ENCODE measurements at regions of chr2 and their contacts with region 1.

Region 1: GRCh38 chr2:230411570-230412370 is 4.2 kb upstream of the SP100 start:
- DNase-seq: peak; percentile 75
- H3K4me3 Mint-ChIP-seq: peak overlapping the region; percentile 87
- H3K27ac Mint-ChIP-seq: peak overlapping the region; percentile 88
- H3K4me1 Mint-ChIP-seq: peaks cover 51% of the 10 kb centered on the region
- H3K27me3 Mint-ChIP-seq: no peaks in the 10 kb centered on the region

Region 2: GRCh38 chr2:230202430-230203109 is 209.2 kb before region 1 on chr2:
- CTCF ChIA-PET with region 1: no interaction called
- POLR2A ChIA-PET with region 1: no interaction called
- intact Hi-C with region 1: loop called (anchors 2 kb)
- DNase-seq: peak; percentile 75
- H3K4me3 Mint-ChIP-seq: peak overlapping the region; percentile 10
- H3K27ac Mint-ChIP-seq: peak overlapping the region; percentile 80
- H3K4me1 Mint-ChIP-seq: peaks cover 35% of the 10 kb centered on the region
- H3K27me3 Mint-ChIP-seq: no peaks in the 10 kb centered on the region

Region 3: DNA sequence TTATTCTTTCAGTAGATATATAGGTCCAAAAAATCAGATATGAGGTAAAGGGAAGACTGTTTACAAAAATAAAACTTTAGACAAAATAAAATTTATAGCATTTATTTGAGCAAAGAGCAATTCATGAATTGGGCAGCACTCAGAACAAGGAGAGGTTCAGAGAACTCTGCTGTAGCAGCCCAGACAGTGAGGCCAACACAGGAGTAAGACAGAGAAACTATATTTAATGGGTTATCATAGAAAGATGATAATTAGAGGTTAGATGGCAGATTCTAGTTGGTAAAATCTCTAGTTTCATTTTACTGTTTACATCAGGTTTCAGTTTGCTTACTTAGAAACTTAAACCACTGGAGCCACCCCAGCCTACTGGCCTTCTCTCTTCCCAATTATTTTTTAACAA is 114.9 kb before region 1 on chr2:
- CTCF ChIA-PET with region 1: no interaction called
- POLR2A ChIA-PET with region 1: no interaction called
- intact Hi-C with region 1: no loop called
- DNase-seq: no peak
- H3K4me3 Mint-ChIP-seq: no peak overlapping the region
- H3K27ac Mint-ChIP-seq: no peak overlapping the region
- H3K4me1 Mint-ChIP-seq: peaks cover 6% of the 10 kb centered on the region
- H3K27me3 Mint-ChIP-seq: no peaks in the 10 kb centered on the region

Region 4: DNA sequence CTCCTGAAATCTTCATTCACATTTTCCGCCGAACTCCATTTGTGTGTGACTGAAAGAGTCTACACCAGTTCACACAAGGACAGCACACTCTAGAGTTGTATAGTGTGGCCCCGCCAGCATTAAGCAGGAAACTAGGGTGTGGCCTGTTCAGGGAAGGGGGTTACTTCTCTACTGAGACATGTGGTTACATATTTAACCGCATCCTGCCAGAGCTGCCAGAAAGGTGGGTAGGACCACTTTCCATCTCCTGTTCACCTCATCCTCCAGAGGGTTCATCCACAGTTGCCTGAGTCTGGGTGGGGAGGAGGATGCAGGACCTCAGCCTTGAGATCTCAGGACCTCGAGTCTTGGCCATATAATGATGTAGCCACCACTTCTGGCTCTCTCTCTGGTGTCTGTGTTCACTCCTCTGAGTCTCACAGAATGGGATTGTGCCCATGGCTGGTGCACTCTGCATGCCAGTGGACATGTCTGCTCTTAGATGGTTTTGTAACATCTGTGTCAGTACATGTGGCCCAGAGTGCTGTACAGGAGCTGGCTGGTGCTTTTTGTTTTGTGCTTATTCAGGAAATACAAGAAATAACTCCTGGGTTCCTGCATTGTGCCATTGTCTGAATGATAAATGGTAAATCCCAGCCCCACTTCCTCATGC is 92.4 kb before region 1 on chr2:
- CTCF ChIA-PET with region 1: no interaction called
- POLR2A ChIA-PET with region 1: no interaction called
- intact Hi-C with region 1: loop called (anchors 2 kb)
- DNase-seq: peak; percentile 83
- H3K4me3 Mint-ChIP-seq: peak overlapping the region; percentile 6
- H3K27ac Mint-ChIP-seq: peak overlapping the region; percentile 80
- H3K4me1 Mint-ChIP-seq: peaks cover 60% of the 10 kb centered on the region
- H3K27me3 Mint-ChIP-seq: no peaks in the 10 kb centered on the region

Region 5: DNA sequence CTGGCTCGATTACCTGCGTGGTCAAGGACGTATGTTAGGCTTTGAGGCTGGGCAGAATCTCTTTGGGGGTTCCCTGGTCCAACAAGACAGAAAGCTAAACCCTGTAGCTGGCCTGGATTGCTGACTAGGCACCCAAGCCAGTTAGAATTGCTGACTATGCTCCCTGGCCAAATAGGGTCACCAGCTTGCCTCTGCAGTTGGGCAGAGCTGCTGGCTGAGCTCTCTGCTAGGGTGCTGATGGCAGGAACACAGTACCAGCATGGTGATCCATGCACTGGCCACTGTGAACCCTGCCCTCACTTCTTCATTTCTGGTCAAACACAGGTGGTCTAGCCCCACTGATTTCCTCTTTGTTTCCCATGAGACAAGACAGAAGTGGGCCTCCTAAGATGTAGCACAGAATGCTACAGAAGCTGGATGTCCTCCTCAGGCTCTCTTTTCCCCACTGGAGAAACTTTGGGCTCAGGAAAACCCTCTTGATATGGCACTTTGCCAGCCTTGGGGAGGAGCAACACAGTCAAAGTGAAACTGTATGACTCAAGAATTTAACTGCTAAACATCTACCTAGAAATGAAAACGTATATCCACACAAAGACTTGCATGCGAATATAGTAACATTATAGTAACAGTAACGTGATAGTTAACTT is 64.0 kb before region 1 on chr2:
- CTCF ChIA-PET with region 1: no interaction called
- POLR2A ChIA-PET with region 1: interaction called, 3 read pairs
- intact Hi-C with region 1: loop called (anchors 2 kb)
- DNase-seq: peak; percentile 70
- H3K4me3 Mint-ChIP-seq: peak overlapping the region; percentile 47
- H3K27ac Mint-ChIP-seq: peak overlapping the region; percentile 92
- H3K4me1 Mint-ChIP-seq: peaks cover 80% of the 10 kb centered on the region
- H3K27me3 Mint-ChIP-seq: no peaks in the 10 kb centered on the region

Region 6: DNA sequence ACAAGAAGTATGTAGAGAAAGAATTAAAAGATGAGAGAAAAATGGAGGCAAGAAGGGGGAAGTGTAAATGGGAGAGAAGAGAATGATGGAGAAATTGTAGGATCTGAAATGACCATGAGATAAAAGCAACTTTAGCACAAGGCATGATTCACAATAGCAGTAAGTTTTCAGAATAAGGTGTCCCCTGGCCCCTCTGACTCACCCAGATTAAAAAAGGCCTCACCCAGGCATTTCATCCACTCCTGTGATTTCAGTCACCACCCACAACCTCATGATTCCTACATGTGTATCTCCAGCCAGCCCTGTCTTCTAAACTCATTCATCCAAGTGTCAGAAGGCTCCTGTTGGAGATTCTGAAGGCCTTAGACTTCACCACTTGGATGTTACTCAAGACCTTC is 60.9 kb after region 1 on chr2:
- CTCF ChIA-PET with region 1: no interaction called
- POLR2A ChIA-PET with region 1: no interaction called
- intact Hi-C with region 1: loop called (anchors 2 kb)
- DNase-seq: peak; percentile 76
- H3K4me3 Mint-ChIP-seq: no peak overlapping the region
- H3K27ac Mint-ChIP-seq: peak overlapping the region; percentile 73
- H3K4me1 Mint-ChIP-seq: peaks cover 32% of the 10 kb centered on the region
- H3K27me3 Mint-ChIP-seq: no peaks in the 10 kb centered on the region

Region 7: GRCh38 chr2:230712443-230713330 is 300.9 kb after region 1 on chr2 and contains the start of gene CAB39:
- CTCF ChIA-PET with region 1: no interaction called
- POLR2A ChIA-PET with region 1: no interaction called
- intact Hi-C with region 1: loop called (anchors 10 kb)
- DNase-seq: peak; percentile 91
- H3K4me3 Mint-ChIP-seq: peak within 1 kb of the TSS; percentile 93
- H3K27ac Mint-ChIP-seq: peak within 1 kb of the TSS; percentile 91
- H3K4me1 Mint-ChIP-seq: peaks cover 41% of the 10 kb centered on the region
- H3K27me3 Mint-ChIP-seq: no peaks in the 10 kb centered on the region
- total RNA-seq, gene CAB39: 128 to 129 TPM